ENCODE measurements at regions of chr14 and their contacts with region 1.

Region 1: GRCh38 chr14:24289649-24290249 is 9.8 kb downstream of the DHRS1 start:
- DNase-seq: peak; percentile 58
- CTCF ChIP-seq: no peak

Region 2: GRCh38 chr14:24279301-24280186 is 10.2 kb before region 1 on chr14:
- CTCF ChIA-PET with region 1: interaction called, 121 read pairs
- POLR2A ChIA-PET with region 1: no interaction called
- DNase-seq: peak; percentile 50
- CTCF ChIP-seq: peak; percentile 11